PC-9 (cell line): ENCODE measurements at regions of chr7 and their contacts with region 1.

Region 1: DNA sequence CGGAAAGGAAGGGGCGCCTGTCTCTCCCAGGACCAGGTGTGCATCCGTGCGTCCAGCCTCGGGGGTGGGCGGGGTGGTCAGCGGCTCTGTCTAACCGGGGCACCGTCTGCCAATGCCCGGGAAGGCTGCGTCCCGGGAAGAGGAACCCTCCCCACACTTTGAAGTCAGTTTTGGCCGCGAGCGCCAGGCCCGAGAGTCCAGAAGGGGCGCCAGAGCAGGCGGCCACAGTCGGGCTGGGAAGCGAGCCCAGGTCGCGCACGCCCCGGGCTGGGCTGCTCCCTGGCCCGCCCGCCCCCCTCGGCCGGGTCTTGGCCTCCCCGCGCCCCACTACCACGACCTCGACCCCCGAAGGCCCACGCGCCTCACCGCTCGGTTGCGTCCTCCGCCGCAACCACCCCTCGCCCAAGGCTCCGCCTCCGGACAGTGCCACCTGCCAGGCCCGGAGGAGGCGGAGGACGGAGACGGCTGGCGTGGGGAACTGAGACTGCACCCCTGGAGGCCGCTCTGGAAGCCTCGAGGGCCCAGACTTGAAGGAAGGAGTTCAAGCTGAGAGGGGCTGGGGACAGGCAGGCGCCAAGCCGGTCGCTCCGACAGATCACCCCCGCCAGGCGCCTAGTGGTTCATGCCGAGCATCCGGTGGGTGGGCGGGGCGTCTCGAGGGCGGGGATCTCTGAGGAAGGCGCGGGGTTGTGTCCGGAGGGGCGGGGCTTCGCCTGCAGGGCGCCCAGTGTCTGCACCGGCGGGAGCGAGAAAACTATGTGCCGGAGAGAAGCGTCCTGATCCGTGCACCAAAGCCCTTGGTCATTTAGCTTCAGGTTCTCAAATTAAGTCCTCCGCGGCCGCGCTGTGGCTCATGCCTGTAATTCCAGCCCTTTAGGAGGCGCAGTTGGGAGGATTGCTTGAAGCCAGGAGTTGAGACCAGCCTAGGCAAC is at the start of gene BRAT1:
- DNase-seq: peak; percentile 95 to 98
- H3K4me3 ChIP-seq: peak within 1 kb of the TSS; percentile 86
- H3K27ac ChIP-seq: peak within 1 kb of the TSS; percentile 87
- H3K4me1 ChIP-seq: peaks cover 36% of the 10 kb centered on the region
- H3K27me3 ChIP-seq: no peaks in the 10 kb centered on the region
- CTCF ChIP-seq: peak; percentile 47
- total RNA-seq, gene BRAT1: 53.9 and 57.7 TPM in 2 replicates

Region 2: GRCh38 chr7:2148189-2148588 is 407.2 kb before region 1 on chr7:
- CTCF ChIA-PET with region 1: no interaction called
- POLR2A ChIA-PET with region 1: no interaction called
- intact Hi-C with region 1: no loop called
- DNase-seq: no peak
- H3K4me3 ChIP-seq: no peak overlapping the region
- H3K27ac ChIP-seq: no peak overlapping the region
- H3K4me1 ChIP-seq: no peaks in the 10 kb centered on the region
- H3K27me3 ChIP-seq: no peaks in the 10 kb centered on the region
- CTCF ChIP-seq: no peak; the same call in 1 of the 2 replicates

Region 3: DNA sequence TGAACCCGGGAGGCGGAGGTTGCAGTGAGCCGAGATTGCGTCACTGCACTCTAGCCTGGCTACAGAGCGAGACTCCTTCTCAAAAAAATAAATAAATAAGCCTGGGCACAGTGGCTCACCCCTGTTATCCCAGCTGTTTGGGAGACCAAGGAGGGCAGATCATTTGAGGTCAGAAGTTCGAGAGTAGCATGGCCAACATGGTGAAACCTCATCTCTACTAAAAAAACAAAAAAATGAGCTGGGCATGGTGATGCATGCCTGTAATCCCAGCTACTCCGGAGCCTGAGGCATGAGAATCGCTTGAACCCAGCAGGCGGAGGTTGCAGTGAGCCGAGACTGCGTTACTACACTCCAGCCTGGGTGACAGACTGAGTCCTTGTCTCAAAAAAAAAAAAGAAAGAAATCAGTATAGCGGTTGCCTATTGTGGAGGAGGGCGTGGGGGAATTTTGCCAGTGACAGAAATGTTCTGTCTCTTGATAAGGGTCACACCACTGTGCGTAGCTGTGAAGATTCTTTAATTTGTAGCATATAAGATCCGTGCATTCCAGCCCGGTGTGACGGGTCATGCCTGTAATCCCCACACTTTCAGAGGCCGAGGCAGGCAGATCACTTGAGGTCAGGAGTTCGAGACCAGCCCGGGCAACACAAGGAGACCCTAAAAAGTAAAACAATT is 218.6 kb before region 1 on chr7:
- CTCF ChIA-PET with region 1: no interaction called
- POLR2A ChIA-PET with region 1: no interaction called
- intact Hi-C with region 1: no loop called
- DNase-seq: no peak
- H3K4me3 ChIP-seq: no peak overlapping the region
- H3K27ac ChIP-seq: no peak overlapping the region
- H3K4me1 ChIP-seq: no peaks in the 10 kb centered on the region
- H3K27me3 ChIP-seq: no peaks in the 10 kb centered on the region
- CTCF ChIP-seq: no peak

Region 4: GRCh38 chr7:2477447-2478398 is 77.7 kb before region 1 on chr7:
- CTCF ChIA-PET with region 1: interaction called, 3 read pairs
- POLR2A ChIA-PET with region 1: no interaction called
- intact Hi-C with region 1: loop called (anchors 5 kb)
- DNase-seq: peak in 1 of 2 experiments; percentile 76
- H3K4me3 ChIP-seq: no peak overlapping the region
- H3K27ac ChIP-seq: no peak overlapping the region
- H3K4me1 ChIP-seq: peaks cover 8% of the 10 kb centered on the region; the same call in 1 of the 2 replicates
- H3K27me3 ChIP-seq: peaks cover 3% of the 10 kb centered on the region; the same call in 1 of the 2 replicates
- CTCF ChIP-seq: peak; percentile 87

Region 5: GRCh38 chr7:2632733-2633537 is 77.5 kb after region 1 on chr7:
- CTCF ChIA-PET with region 1: no interaction called
- POLR2A ChIA-PET with region 1: interaction called, 8 read pairs
- intact Hi-C with region 1: loop called (anchors 1 kb)
- DNase-seq: peak in 1 of 2 experiments; percentile 56
- H3K4me3 ChIP-seq: peak overlapping the region; percentile 87
- H3K27ac ChIP-seq: peak overlapping the region; percentile 45
- H3K4me1 ChIP-seq: peaks cover 22% of the 10 kb centered on the region
- H3K27me3 ChIP-seq: no peaks in the 10 kb centered on the region
- CTCF ChIP-seq: no peak

Region 6: GRCh38 chr7:2668401-2668800 is 113.0 kb after region 1 on chr7:
- CTCF ChIA-PET with region 1: no interaction called
- POLR2A ChIA-PET with region 1: interaction called, 15 read pairs
- intact Hi-C with region 1: no loop called
- DNase-seq: peak; percentile 55
- H3K4me3 ChIP-seq: no peak overlapping the region
- H3K27ac ChIP-seq: no peak overlapping the region
- H3K4me1 ChIP-seq: 0 out of 2 replicates have a peak, but pooled peaks cover 5% of the 10 kb centered on the region
- H3K27me3 ChIP-seq: no peaks in the 10 kb centered on the region
- CTCF ChIP-seq: no peak

Region 7: DNA sequence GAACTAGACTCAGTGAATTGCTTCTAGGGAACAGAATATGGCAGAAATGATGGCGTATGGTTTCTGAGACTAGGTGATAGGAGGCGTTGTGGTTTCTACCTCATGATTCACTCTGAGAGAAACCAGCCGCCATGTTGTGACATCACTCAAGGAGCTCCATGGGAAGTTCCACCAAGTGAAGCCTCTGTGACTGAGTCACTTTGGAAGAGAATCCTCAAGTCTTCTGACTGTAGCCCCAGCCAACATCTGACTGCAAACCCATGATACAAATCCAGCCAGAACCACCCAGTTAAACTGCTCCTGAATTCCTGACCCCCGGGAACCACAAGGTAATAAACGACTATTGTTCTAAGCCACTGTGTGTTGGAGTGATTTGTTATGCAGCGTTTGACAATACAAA is 579.3 kb after region 1 on chr7:
- CTCF ChIA-PET with region 1: no interaction called
- POLR2A ChIA-PET with region 1: no interaction called
- intact Hi-C with region 1: no loop called
- DNase-seq: no peak
- H3K4me3 ChIP-seq: no peak overlapping the region
- H3K27ac ChIP-seq: no peak overlapping the region
- H3K4me1 ChIP-seq: peaks cover under 1% of the 10 kb centered on the region
- H3K27me3 ChIP-seq: no peaks in the 10 kb centered on the region
- CTCF ChIP-seq: no peak